HCT116 (cell line): ENCODE measurements at regions of chr16 and their contacts with region 1.

Region 1: DNA sequence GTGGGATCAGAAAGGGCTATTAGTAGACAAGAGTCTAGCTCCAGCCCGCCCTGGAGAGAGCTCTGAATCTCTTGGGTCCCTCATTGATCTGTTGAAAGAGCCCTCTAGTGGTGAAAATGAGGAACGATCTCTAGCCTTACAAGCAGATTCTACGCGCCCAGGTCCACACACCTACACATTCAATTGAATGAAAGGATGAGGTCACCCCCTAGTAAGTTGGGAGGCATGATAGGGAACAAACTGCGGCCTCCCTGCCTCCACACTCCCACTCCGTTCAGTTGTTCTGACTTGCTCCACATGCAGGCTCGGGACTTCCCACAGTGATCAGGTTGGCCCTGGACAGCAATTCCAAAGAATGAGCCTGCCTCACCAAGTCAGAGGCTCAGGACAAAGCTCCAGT is 2.9 kb upstream of the CACNG3 start:
- DNase-seq: peak; percentile 34
- ATAC-seq: peak; percentile 88
- H3K4me3 ChIP-seq: no peak overlapping the region
- H3K27ac ChIP-seq: no peak overlapping the region
- H3K4me1 ChIP-seq: no peaks in the 10 kb centered on the region
- H3K27me3 ChIP-seq: 0 out of 2 replicates have a peak, but pooled peaks cover 8% of the 10 kb centered on the region
- CTCF ChIP-seq: peak; percentile 42 to 73 (median 64); a peak in 5 of 6 replicates
- POLR2A ChIP-seq: no peak
- RAD21 ChIP-seq: peak; percentile 54

Region 2: GRCh38 chr16:23556881-23557778 is 696.1 kb before region 1 on chr16 and contains the starts of genes EARS2 and UBFD1:
- CTCF ChIA-PET with region 1: no interaction called
- POLR2A ChIA-PET with region 1: no interaction called
- RAD21 ChIA-PET with region 1: no interaction called
- intact Hi-C with region 1: no loop called
- DNase-seq: peak; percentile 97
- ATAC-seq: peak; percentile 92
- H3K4me3 ChIP-seq: peak within 1 kb of the TSS; percentile 69 to 73
- H3K27ac ChIP-seq: peak within 1 kb of the TSS; percentile 81
- H3K4me1 ChIP-seq: peaks cover 9 to 20% of the 10 kb centered on the region in 2 experiments
- H3K27me3 ChIP-seq: no peaks in the 10 kb centered on the region
- CTCF ChIP-seq: peak; percentile 79 to 94 (median 89)
- POLR2A ChIP-seq: peak; percentile 83
- RAD21 ChIP-seq: peak; percentile 57
- total RNA-seq, gene EARS2: 35.6 TPM
- total RNA-seq, gene UBFD1: 89.6 TPM

Region 3: DNA sequence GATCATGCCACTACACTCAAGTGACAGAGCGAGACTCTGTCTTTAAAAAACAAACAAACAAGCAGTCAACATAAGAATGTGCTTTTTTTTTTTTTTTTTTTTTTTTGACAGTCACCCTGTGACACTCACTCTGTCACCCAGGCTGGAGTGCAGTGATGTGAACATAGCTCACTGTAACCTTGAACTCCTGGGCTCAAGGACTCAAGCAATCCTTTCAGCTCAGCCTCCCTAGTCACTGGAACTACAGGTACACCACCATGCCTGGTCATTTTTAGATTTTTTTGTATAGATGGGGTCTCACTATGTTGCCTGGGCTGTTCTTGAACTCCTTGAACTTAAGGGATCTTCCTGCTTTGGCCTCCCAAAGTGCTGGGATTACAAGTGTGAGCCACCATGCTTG is 513.7 kb before region 1 on chr16:
- CTCF ChIA-PET with region 1: no interaction called
- POLR2A ChIA-PET with region 1: no interaction called
- RAD21 ChIA-PET with region 1: no interaction called
- intact Hi-C with region 1: loop called (anchors 5 kb)
- DNase-seq: no peak
- ATAC-seq: no peak
- H3K4me3 ChIP-seq: no peak overlapping the region
- H3K27ac ChIP-seq: no peak overlapping the region
- H3K4me1 ChIP-seq: no peaks in the 10 kb centered on the region
- H3K27me3 ChIP-seq: 0 out of 2 replicates have a peak, but pooled peaks cover 3% of the 10 kb centered on the region
- CTCF ChIP-seq: no peak
- POLR2A ChIP-seq: no peak
- RAD21 ChIP-seq: no peak

Region 4: GRCh38 chr16:24070851-24071250 is 182.3 kb before region 1 on chr16:
- CTCF ChIA-PET with region 1: interaction called, 39 read pairs
- POLR2A ChIA-PET with region 1: no interaction called
- RAD21 ChIA-PET with region 1: interaction called, 6 to 7 read pairs
- intact Hi-C with region 1: loop called (anchors 10 kb)
- DNase-seq: peak; percentile 43
- ATAC-seq: peak; percentile 97
- H3K4me3 ChIP-seq: no peak overlapping the region
- H3K27ac ChIP-seq: no peak overlapping the region
- H3K4me1 ChIP-seq: no peaks in the 10 kb centered on the region
- H3K27me3 ChIP-seq: peaks cover 35% of the 10 kb centered on the region
- CTCF ChIP-seq: peak; percentile 38 to 75 (median 66); a peak in 5 of 6 replicates
- POLR2A ChIP-seq: no peak
- RAD21 ChIP-seq: peak; percentile 62

Region 5: DNA sequence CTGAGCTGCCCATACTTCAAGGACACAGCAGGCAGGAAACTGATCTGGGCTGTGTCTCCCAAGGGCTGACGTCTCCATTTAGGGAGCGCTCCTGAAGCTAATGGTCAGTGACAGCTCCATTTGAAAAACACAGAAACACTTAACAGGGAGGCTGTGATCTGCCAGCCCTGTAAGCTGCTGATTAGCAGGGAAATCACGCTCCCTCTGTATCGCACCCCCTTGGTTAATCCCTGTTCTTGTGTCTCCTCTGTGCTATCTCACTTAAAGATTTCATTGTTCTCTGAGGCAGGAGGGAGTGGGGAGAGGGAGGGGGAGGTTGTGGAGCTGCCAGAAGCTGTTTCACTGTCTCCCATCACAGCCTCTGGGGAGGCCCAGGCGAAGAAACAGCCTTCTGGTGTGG is 44.5 kb before region 1 on chr16:
- CTCF ChIA-PET with region 1: no interaction called
- POLR2A ChIA-PET with region 1: no interaction called
- RAD21 ChIA-PET with region 1: no interaction called
- intact Hi-C with region 1: no loop called
- DNase-seq: no peak
- ATAC-seq: no peak
- H3K4me3 ChIP-seq: no peak overlapping the region
- H3K27ac ChIP-seq: no peak overlapping the region
- H3K4me1 ChIP-seq: no peaks in the 10 kb centered on the region
- H3K27me3 ChIP-seq: peaks cover 63% of the 10 kb centered on the region
- CTCF ChIP-seq: no peak
- POLR2A ChIP-seq: no peak
- RAD21 ChIP-seq: no peak